Activated CD8-positive, alpha-beta T cell treated with anti-CD3 and anti-CD28 coated beads for 36 hours (primary cell): ENCODE measurements at regions of chr6 and their contacts with region 1.

Region 1: GRCh38 chr6:155418017-155418761 is 37.5 kb downstream of the NOX3 start:
- DNase-seq: peak; percentile 86
- ATAC-seq: peak; percentile 79
- H3K4me3 Mint-ChIP-seq: peak overlapping the region; percentile 68
- H3K27ac Mint-ChIP-seq: peak overlapping the region; percentile 99
- H3K4me1 Mint-ChIP-seq: peaks cover 46% of the 10 kb centered on the region
- H3K27me3 Mint-ChIP-seq: no peaks in the 10 kb centered on the region
- CTCF ChIP-seq: no peak

Region 2: GRCh38 chr6:155510879-155511278 is 92.7 kb after region 1 on chr6:
- CTCF ChIA-PET with region 1: no interaction called
- POLR2A ChIA-PET with region 1: no interaction called
- intact Hi-C with region 1: loop called (anchors 5 kb)
- DNase-seq: peak; percentile 19
- ATAC-seq: peak; percentile 96
- H3K4me3 Mint-ChIP-seq: no peak overlapping the region
- H3K27ac Mint-ChIP-seq: peak overlapping the region; percentile 81
- H3K4me1 Mint-ChIP-seq: peaks cover 21% of the 10 kb centered on the region
- H3K27me3 Mint-ChIP-seq: no peaks in the 10 kb centered on the region
- CTCF ChIP-seq: no peak